Esophagus squamous epithelium (tissue), 5 donors: ENCODE measurements at regions of chr1 and their contacts with region 1.

Region 1: DNA sequence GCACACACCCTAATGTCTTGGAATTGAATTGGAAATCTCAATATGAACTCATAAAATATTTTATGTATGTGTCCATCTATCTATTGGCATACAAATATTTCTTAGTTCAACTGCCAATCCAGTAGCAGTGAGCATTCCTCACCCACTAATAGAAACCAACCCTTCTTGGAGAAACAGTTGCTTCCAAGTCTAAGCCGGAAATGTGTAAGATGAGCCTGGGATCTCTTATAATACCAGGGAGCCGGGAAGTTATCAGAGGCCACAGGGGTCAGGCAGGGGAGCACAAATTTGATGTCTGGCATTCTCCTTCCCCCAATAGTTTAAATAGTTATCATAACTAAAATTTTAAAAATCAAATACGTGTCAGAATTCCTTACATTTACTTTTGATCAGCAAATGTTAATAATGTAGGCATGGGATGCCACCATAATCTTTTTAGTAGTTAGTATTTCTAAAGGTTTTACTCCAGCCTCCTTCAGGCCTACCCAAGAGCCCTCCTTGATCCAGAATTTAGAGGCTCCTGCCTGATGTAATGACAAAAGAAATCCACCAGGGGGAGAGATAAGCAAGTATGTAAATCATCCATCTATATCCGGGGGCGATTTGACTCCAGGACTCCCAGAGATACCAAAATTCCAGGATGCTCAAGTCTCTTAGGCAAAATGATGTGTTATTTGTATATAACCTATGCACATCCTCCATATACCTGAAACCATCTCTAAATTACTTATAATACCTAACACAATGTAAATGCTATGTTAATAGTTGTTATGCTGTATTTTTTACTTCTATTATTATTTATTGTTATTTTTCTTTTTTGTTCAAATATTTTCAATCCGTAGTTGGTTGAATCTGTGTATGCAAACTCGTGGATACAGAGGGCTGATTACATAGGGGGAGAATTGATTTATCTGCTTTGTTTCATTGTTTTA is 218.7 kb upstream of the COA6 start:
- DNase-seq: no peak
- H3K4me3 ChIP-seq: no peak overlapping the region
- H3K27ac ChIP-seq: no peak overlapping the region
- H3K4me1 ChIP-seq: no peaks in the 10 kb centered on the region
- H3K27me3 ChIP-seq: no peaks in the 10 kb centered on the region
- CTCF ChIP-seq: peak; percentile 34 to 87 (median 80)
- POLR2A ChIP-seq: no peak

Region 2: GRCh38 chr1:233960386-233960785 is 194.2 kb before region 1 on chr1:
- intact Hi-C with region 1: no loop called
- DNase-seq: no peak
- H3K4me3 ChIP-seq: no peak overlapping the region
- H3K27ac ChIP-seq: no peak overlapping the region
- H3K4me1 ChIP-seq: no peaks in the 10 kb centered on the region
- H3K27me3 ChIP-seq: peaks cover 0 to 4% (median 0%) of the 10 kb centered on the region in 4 donors
- CTCF ChIP-seq: no peak
- POLR2A ChIP-seq: no peak

Region 3: GRCh38 chr1:234326497-234327366 is 172.1 kb after region 1 on chr1:
- intact Hi-C with region 1: loop called (anchors 10 kb)
- DNase-seq: no peak
- H3K4me3 ChIP-seq: peak overlapping the region in 2 of 4 donors; percentile 37 to 41
- H3K27ac ChIP-seq: peak overlapping the region in 1 of 4 donors; percentile 15
- H3K4me1 ChIP-seq: peaks cover 0 to 11% (median 0%) of the 10 kb centered on the region in 3 donors
- H3K27me3 ChIP-seq: peaks cover 0 to 42% (median 0%) of the 10 kb centered on the region in 4 donors
- CTCF ChIP-seq: peak; percentile 61 to 80 (median 64)
- POLR2A ChIP-seq: no peak

Region 4: DNA sequence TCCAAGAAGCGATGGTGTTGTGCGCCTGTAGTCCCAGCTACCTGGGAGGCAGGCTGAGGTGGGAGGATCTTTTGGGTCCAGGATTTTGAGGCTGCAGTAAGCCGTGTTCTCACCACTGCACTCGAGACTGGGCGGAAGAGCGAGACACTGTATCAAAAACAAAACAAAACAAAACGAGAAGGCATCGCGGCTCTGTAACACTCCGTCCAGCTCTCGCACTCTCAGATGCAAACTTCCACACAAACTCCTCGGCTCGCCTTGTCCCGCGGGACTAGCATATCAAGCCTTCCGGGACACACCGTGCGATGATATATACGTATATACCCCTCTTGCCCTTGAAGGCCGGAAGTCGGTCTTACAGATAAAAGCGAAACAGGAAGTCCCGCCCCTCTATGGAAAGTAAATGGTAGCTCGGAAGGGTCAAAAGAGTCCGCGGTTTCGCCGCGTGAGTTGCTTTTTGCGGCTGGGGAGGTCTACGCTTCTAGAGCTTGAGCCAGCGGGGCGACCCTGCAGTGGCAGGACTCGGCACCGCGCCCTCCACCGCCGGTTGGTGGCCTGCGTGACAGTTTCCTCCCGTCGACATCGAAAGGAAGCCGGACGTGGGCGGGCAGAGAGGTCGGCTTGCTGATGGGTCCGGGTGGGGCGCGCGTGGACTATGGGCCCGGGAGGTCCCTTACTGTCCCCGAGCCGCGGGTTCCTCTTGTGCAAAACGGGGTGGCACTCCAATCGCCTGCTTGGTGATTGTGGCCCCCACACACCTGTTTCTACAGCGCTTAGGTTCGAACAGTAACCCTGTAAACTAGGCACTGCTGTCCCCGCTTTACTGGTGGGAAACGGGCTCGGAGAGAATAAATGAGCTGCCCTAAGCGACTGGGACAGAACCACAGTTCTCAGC is 218.7 kb after region 1 on chr1 and contains the start of gene COA6:
- intact Hi-C with region 1: no loop called
- DNase-seq: peak; percentile 87
- H3K4me3 ChIP-seq: peak within 1 kb of the TSS; percentile 69 to 94 (median 93)
- H3K27ac ChIP-seq: peak within 1 kb of the TSS; percentile 93 to 97 (median 97)
- H3K4me1 ChIP-seq: peaks cover 4 to 40% (median 16%) of the 10 kb centered on the region in 3 donors
- H3K27me3 ChIP-seq: no peaks in the 10 kb centered on the region
- CTCF ChIP-seq: peak in 2 of 6 experiments; percentile 22 to 27
- POLR2A ChIP-seq: peak in 3 of 4 donors; percentile 79 to 88 (median 84)
- total RNA-seq, gene COA6: 17.1 to 33.5 (median 24.6) TPM